BJ (cell line): ENCODE measurements at regions of chr17 and their contacts with region 1.

Region 1: GRCh38 chr17:40443583-40444327 is 505 bp downstream of the IGFBP4 start:
- DNase-seq: no peak
- H3K4me3 ChIP-seq: peak overlapping the region; percentile 95
- H3K27me3 ChIP-seq: no peaks in the 10 kb centered on the region
- CTCF ChIP-seq: peak; percentile 35

Region 2: DNA sequence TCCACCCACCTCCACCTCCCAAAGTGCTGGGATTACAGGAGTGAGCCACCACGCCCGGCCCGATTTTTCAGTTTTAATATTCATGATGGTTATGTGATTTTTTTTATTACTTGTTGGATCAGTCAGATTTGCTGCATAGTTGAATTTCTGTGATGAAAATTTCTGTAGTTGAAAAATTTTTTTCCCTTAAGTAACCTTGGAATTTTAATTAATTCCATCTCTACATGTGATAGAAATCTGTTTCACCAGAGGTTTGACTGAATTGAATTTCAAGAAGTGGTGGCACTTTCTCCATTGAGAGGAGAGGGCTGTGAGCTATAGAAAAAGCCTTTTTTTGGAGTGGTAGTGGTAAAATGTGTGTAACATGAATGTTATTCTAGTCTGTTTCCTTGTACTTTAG is 200.0 kb before region 1 on chr17:
- CTCF ChIA-PET with region 1: no interaction called
- POLR2A ChIA-PET with region 1: no interaction called
- DNase-seq: peak; percentile 14
- H3K4me3 ChIP-seq: no peak overlapping the region
- H3K27me3 ChIP-seq: no peaks in the 10 kb centered on the region
- CTCF ChIP-seq: no peak

Region 3: GRCh38 chr17:40536295-40537171 is 92.8 kb after region 1 on chr17:
- CTCF ChIA-PET with region 1: interaction called, 113 read pairs
- POLR2A ChIA-PET with region 1: interaction called, 14 read pairs
- DNase-seq: no peak
- H3K4me3 ChIP-seq: no peak overlapping the region
- H3K27me3 ChIP-seq: no peaks in the 10 kb centered on the region
- CTCF ChIP-seq: no peak

Region 4: GRCh38 chr17:40542558-40543411 is 99.0 kb after region 1 on chr17:
- CTCF ChIA-PET with region 1: interaction called, 5 read pairs
- POLR2A ChIA-PET with region 1: interaction called, 14 read pairs
- DNase-seq: peak; percentile 84
- H3K4me3 ChIP-seq: no peak overlapping the region
- H3K27me3 ChIP-seq: no peaks in the 10 kb centered on the region
- CTCF ChIP-seq: no peak

Region 5: GRCh38 chr17:40551879-40552768 is 108.4 kb after region 1 on chr17:
- CTCF ChIA-PET with region 1: interaction called, 85 read pairs
- POLR2A ChIA-PET with region 1: no interaction called
- DNase-seq: peak; percentile 97
- H3K4me3 ChIP-seq: no peak overlapping the region
- H3K27me3 ChIP-seq: no peaks in the 10 kb centered on the region
- CTCF ChIP-seq: no peak